Transverse colon (tissue), 4 donors: ENCODE measurements at regions of chr1 and their contacts with region 1.

Region 1: GRCh38 chr1:94055459-94056122 is 65.4 kb downstream of the ABCA4 start:
- DNase-seq: no peak
- H3K4me3 ChIP-seq: no peak overlapping the region
- H3K27ac ChIP-seq: no peak overlapping the region
- H3K4me1 ChIP-seq: no peaks in the 10 kb centered on the region
- H3K27me3 ChIP-seq: no peaks in the 10 kb centered on the region
- CTCF ChIP-seq: no peak
- EP300 ChIP-seq: no peak
- POLR2A ChIP-seq: no peak

Region 2: DNA sequence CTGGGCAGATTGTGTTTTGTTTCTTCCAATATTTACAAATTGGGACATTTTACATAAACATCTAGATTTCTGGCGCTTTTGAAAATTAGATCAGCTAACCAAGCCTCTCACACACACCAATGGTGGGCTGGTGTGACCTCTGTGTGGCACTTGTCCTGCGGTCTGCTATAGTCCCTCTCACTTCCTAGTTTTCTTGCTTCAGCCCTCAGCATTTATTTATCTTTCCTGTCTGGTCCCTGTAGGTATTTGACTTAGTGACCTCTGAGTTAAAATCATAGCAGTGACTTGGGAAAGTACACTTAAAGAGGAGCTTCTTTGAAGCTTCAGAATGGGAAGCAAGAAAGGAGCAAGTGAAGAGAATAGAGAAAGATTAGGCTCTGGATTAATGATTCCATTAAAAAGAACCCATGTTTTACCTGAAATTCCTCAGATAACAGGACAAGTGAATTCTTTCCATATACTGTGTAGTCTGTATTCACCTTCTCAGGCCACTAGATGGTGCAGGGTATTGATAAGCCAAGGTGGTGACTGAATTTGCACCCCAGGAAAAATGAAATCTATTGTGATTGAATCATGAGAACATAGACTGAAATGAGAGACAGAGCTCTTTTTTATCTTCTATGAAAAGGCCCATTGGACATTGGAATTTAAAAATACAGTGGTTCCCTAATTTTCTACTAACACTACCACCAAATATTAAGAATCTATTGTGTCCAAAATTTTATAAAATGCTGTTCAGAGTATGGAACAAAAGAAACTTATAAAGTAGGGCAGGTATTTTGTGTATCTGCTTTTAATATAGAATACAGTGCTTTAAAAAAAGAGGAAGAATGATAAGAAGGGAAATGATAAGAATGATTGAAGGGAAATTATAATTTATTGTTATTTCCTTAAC is 1087.2 kb before region 1 on chr1:
- in situ Hi-C with region 1: no loop called
- intact Hi-C with region 1: no loop called
- DNase-seq: no peak
- H3K4me3 ChIP-seq: no peak overlapping the region
- H3K27ac ChIP-seq: no peak overlapping the region
- H3K4me1 ChIP-seq: peaks cover 0 to 15% (median 0%) of the 10 kb centered on the region in 4 donors
- H3K27me3 ChIP-seq: no peaks in the 10 kb centered on the region
- CTCF ChIP-seq: peak; percentile 45 to 58 (median 48)
- EP300 ChIP-seq: no peak
- POLR2A ChIP-seq: no peak

Region 3: GRCh38 chr1:94068999-94069918 is 13.7 kb after region 1 on chr1:
- in situ Hi-C with region 1: no loop called
- intact Hi-C with region 1: no loop called
- DNase-seq: peak; percentile 55
- H3K4me3 ChIP-seq: no peak overlapping the region
- H3K27ac ChIP-seq: peak overlapping the region; percentile 65 to 79 (median 74)
- H3K4me1 ChIP-seq: peaks cover 12 to 34% (median 25%) of the 10 kb centered on the region in 4 donors
- H3K27me3 ChIP-seq: no peaks in the 10 kb centered on the region
- CTCF ChIP-seq: peak in 2 of 5 experiments; percentile 12 to 24
- EP300 ChIP-seq: no peak
- POLR2A ChIP-seq: no peak

Region 4: GRCh38 chr1:94335950-94336349 is 280.4 kb after region 1 on chr1:
- in situ Hi-C with region 1: loop called (anchors 5 to 10 kb)
- intact Hi-C with region 1: no loop called
- DNase-seq: peak; percentile 70
- H3K4me3 ChIP-seq: no peak overlapping the region
- H3K27ac ChIP-seq: no peak overlapping the region
- H3K4me1 ChIP-seq: no peaks in the 10 kb centered on the region
- H3K27me3 ChIP-seq: no peaks in the 10 kb centered on the region
- CTCF ChIP-seq: peak; percentile 71 to 94 (median 74)
- EP300 ChIP-seq: no peak
- POLR2A ChIP-seq: no peak

Region 5: DNA sequence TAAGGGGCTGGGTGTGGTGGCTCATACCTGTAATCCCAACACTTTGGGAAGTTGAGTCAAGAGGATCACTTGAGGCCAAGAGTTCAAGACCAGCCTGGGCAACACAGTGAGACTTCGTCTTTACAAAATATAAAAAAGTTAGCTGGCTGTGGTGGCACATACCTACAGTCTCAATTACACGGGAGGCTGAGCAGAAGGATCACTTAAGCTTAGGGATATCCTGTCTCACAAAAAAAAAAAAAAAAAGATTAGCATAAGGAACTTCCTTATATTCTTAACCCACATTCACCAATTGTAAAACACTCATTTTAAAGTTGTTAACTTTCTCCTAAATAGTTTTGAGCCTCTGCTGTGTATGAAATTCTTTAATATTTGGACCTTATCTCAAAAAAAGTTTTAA is 415.7 kb after region 1 on chr1:
- in situ Hi-C with region 1: loop called in 3 of 4 experiments (anchors 10 to 25 kb)
- intact Hi-C with region 1: no loop called
- DNase-seq: no peak
- H3K4me3 ChIP-seq: no peak overlapping the region
- H3K27ac ChIP-seq: no peak overlapping the region
- H3K4me1 ChIP-seq: peaks cover 0 to 6% (median 0%) of the 10 kb centered on the region in 4 donors
- H3K27me3 ChIP-seq: no peaks in the 10 kb centered on the region
- CTCF ChIP-seq: no peak
- EP300 ChIP-seq: no peak
- POLR2A ChIP-seq: no peak